Testis (tissue), 5 donors: ENCODE measurements at regions of chr1 and their contacts with region 1.

Region 1: GRCh38 chr1:40404670-40405462 is 31.3 kb downstream of the SMAP2 start:
- DNase-seq: no peak
- H3K4me3 ChIP-seq: no peak overlapping the region
- H3K27ac ChIP-seq: no peak overlapping the region
- H3K4me1 ChIP-seq: no peaks in the 10 kb centered on the region
- H3K27me3 ChIP-seq: no peaks in the 10 kb centered on the region
- CTCF ChIP-seq: peak; percentile 79 to 85 (median 80)
- POLR2A ChIP-seq: no peak

Region 2: GRCh38 chr1:40153073-40153770 is 251.6 kb before region 1 on chr1:
- intact Hi-C with region 1: loop called (anchors 5 kb)
- DNase-seq: peak; percentile 42
- H3K4me3 ChIP-seq: no peak overlapping the region
- H3K27ac ChIP-seq: no peak overlapping the region
- H3K4me1 ChIP-seq: no peaks in the 10 kb centered on the region
- H3K27me3 ChIP-seq: no peaks in the 10 kb centered on the region
- CTCF ChIP-seq: peak; percentile 27 to 69 (median 35)
- POLR2A ChIP-seq: no peak

Region 3: DNA sequence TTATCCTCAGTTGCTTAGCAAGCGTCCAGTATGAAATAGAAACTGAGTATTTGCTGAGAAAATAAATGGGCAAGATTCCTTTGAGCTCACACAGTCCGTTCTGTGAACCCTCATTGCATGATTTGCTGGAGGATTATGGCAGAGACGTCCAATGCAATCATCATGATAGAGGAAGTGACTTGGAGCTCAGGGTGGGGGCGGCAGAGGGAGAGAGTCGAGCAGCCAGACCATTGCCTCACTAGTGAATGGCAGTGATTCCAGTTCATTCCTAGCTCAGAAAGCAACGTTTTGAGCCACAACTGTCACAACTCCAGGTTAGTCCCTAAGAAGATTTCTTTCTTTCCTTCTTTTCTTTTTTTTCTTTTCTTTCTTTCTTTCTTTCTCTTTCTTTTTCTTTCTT is 60.3 kb before region 1 on chr1:
- intact Hi-C with region 1: loop called (anchors 10 kb)
- DNase-seq: peak; percentile 41
- H3K4me3 ChIP-seq: no peak overlapping the region
- H3K27ac ChIP-seq: no peak overlapping the region
- H3K4me1 ChIP-seq: no peaks in the 10 kb centered on the region
- H3K27me3 ChIP-seq: no peaks in the 10 kb centered on the region
- CTCF ChIP-seq: no peak
- POLR2A ChIP-seq: no peak

Region 4: GRCh38 chr1:40539338-40539737 is 134.5 kb after region 1 on chr1:
- intact Hi-C with region 1: no loop called
- DNase-seq: no peak
- H3K4me3 ChIP-seq: no peak overlapping the region
- H3K27ac ChIP-seq: no peak overlapping the region
- H3K4me1 ChIP-seq: no peaks in the 10 kb centered on the region
- H3K27me3 ChIP-seq: no peaks in the 10 kb centered on the region
- CTCF ChIP-seq: no peak
- POLR2A ChIP-seq: no peak